HEK293T (cell line): ENCODE measurements at regions of chr16 and their contacts with region 1.

Region 1: DNA sequence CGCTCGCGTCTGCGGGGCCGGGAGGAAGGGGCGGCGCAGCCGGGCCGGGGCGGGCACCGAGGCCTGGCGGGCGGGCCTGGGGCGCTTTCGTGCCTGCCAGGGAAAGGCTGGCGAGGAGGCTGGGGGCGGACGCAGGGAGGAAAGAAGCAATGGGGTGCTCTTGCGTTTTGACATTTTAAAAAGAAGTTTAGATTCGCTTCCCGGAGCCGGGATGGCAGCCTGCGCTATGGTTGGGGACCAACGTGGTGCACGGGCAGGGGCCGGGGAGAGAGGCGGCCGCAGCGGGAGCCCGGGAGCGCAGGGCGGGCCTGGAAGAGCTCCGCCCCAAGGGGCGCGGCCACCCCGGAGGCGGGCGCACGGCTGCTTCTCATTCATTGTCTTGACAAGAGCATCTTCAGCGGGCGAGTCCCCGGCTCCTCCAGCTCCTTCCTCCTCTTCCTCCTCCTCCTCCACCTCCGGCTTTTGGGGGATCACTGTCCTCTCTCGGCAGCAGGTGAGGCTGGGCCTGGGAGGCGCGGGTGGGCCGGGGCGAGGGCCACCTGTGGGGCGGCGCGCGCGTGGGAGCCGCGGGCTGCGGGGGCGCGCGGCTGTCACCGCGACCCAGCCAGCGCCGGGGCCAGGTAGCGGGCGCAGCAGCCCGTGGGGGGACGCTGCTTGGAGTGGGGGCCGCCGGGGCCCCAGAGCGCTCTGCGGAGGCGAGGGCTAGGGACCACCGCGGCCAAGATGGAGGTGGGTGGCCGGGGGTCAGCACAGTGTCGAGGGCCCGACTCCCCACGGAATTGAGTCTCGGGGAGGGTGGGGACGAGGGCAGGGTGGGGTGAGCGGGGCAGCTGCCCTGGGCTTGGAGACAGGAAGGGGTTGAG is at the start of gene CORO1A:
- DNase-seq: peak; percentile 89

Region 2: GRCh38 chr16:30149250-30149930 is 34.1 kb before region 1 on chr16:
- CTCF ChIA-PET with region 1: no interaction called
- POLR2A ChIA-PET with region 1: no interaction called
- DNase-seq: no peak

Region 3: DNA sequence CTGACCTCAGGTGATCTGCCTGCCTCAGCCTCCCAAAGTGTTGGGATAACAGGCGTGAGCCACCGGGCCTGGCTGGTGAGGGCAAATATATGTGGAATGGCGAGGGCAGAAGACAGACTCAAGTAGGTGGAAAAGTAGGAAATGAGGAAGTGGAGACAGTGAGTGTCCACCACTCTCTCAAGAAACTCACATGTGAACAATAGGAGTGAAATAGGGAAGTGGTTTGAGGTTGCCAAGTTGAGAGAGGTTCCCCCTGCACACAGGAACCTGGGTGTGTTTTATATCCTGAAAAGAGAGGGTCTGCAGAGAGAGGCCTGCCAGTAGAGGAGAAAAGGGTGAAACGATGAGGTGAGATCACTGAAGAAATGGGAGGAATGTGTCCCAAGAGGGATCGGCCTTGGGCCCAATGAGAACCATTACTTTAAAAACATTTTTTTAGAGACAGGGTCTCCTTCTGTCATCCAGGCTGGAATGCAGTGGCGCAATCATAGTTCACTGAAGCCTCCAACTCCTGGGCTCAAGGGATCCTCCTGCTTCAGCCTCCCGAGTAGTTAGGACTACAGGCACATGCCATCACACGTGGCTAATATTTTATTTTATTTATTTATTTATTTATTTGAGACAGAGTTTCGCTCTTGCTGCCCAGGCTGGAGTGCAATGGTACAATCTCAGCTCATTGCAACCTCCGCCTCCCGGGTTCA is 17.1 kb before region 1 on chr16:
- CTCF ChIA-PET with region 1: no interaction called
- POLR2A ChIA-PET with region 1: interaction called, 10 read pairs
- DNase-seq: no peak

Region 4: GRCh38 chr16:30541502-30542329 is 358.3 kb after region 1 on chr16:
- CTCF ChIA-PET with region 1: no interaction called
- POLR2A ChIA-PET with region 1: no interaction called
- DNase-seq: no peak

Region 5: GRCh38 chr16:30786936-30787612 is 603.6 kb after region 1 on chr16 and contains the start of gene ZNF629:
- CTCF ChIA-PET with region 1: no interaction called
- POLR2A ChIA-PET with region 1: no interaction called
- DNase-seq: peak; percentile 86